Aorta (tissue), 5 donors: ENCODE measurements at regions of chr9 and their contacts with region 1.

Region 1: GRCh38 chr9:75855509-75855908 is 35.0 kb upstream of the PCSK5 start:
- DNase-seq: no peak
- ATAC-seq: no peak
- H3K4me3 ChIP-seq: no peak overlapping the region
- H3K27ac ChIP-seq: no peak overlapping the region
- H3K4me1 ChIP-seq: no peaks in the 10 kb centered on the region
- H3K27me3 ChIP-seq: no peaks in the 10 kb centered on the region

Region 2: GRCh38 chr9:75615284-75615683 is 240.2 kb before region 1 on chr9:
- intact Hi-C with region 1: loop called in 1 of 2 experiments (anchors 10 kb)
- DNase-seq: no peak
- ATAC-seq: no peak
- H3K4me3 ChIP-seq: no peak overlapping the region
- H3K27ac ChIP-seq: no peak overlapping the region
- H3K4me1 ChIP-seq: peaks cover 0 to 2% of the 10 kb centered on the region in 2 donors
- H3K27me3 ChIP-seq: no peaks in the 10 kb centered on the region

Region 3: DNA sequence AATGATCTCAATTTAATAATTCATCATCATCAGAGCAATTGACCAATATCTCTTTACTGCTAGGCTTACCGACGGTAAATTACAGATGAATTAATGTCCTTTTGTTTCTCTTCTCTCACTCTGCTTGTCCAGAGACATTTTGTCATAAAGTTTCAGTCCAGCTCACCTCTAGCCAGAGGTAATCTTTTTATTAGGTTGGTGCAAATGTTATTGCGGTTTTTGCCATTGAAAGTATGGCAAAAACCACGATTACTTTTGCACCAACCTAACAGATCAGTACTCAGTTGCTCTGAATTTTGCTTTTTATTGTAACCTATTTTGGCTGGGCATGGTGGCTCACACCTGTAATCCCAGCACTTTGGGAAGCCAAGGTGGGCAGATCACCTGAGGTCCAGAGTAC is 131.9 kb before region 1 on chr9:
- intact Hi-C with region 1: loop called in 1 of 2 experiments (anchors 10 kb)
- DNase-seq: no peak
- ATAC-seq: no peak
- H3K4me3 ChIP-seq: no peak overlapping the region
- H3K27ac ChIP-seq: no peak overlapping the region
- H3K4me1 ChIP-seq: peaks cover 2 to 7% of the 10 kb centered on the region in 2 donors
- H3K27me3 ChIP-seq: no peaks in the 10 kb centered on the region